ENCODE measurements at regions of chr1 and their contacts with region 1.

Region 1: DNA sequence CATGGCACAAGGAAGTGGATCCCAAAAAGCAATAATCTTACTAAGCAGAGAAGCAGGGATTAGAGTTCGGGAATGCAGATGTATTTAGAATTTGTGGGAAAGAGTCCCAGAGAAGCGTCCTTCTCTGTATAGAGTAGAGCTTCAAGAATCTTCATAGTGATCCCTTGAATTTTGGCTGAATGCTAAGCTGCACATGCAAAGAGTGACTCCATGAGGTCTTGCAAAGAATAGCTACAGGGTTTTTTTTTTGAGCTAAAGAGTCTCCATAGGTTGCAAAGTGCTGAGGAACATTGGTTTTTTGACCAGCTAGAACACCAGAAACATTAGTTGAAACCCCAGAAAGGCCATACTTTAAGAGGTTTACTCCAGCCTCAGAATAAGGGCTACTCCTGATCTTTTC is 206.7 kb downstream of the CTH start:
- DNase-seq: no peak
- ATAC-seq: peak; percentile 95
- H3K4me3 Mint-ChIP-seq: no peak overlapping the region
- H3K27ac Mint-ChIP-seq: no peak overlapping the region
- H3K4me1 Mint-ChIP-seq: 0 out of 2 replicates have a peak, but pooled peaks cover 2% of the 10 kb centered on the region
- H3K27me3 Mint-ChIP-seq: no peaks in the 10 kb centered on the region
- CTCF ChIP-seq: no peak

Region 2: GRCh38 chr1:70528590-70529333 is 89.0 kb before region 1 on chr1:
- CTCF ChIA-PET with region 1: interaction called, 42 read pairs
- POLR2A ChIA-PET with region 1: no interaction called
- DNase-seq: peak; percentile 53
- ATAC-seq: peak; percentile 99
- H3K4me3 Mint-ChIP-seq: no peak overlapping the region
- H3K27ac Mint-ChIP-seq: no peak overlapping the region
- H3K4me1 Mint-ChIP-seq: no peaks in the 10 kb centered on the region
- H3K27me3 Mint-ChIP-seq: no peaks in the 10 kb centered on the region
- CTCF ChIP-seq: peak; percentile 31; the same call in 1 of the 2 replicates